Motor neuron (in vitro differentiated cells): ENCODE measurements at regions of chr1 and their contacts with region 1.

Region 1: GRCh38 chr1:151934048-151934493 is 24.8 kb upstream of the THEM4 start:
- ATAC-seq: peak in 7 of 8 experiments; percentile 57 to 96 (median 76)
- H3K4me3 ChIP-seq: no peak overlapping the region
- H3K27ac ChIP-seq: no peak overlapping the region
- H3K4me1 ChIP-seq: peaks cover 0 to 15% of the 10 kb centered on the region in 2 donors

Region 2: DNA sequence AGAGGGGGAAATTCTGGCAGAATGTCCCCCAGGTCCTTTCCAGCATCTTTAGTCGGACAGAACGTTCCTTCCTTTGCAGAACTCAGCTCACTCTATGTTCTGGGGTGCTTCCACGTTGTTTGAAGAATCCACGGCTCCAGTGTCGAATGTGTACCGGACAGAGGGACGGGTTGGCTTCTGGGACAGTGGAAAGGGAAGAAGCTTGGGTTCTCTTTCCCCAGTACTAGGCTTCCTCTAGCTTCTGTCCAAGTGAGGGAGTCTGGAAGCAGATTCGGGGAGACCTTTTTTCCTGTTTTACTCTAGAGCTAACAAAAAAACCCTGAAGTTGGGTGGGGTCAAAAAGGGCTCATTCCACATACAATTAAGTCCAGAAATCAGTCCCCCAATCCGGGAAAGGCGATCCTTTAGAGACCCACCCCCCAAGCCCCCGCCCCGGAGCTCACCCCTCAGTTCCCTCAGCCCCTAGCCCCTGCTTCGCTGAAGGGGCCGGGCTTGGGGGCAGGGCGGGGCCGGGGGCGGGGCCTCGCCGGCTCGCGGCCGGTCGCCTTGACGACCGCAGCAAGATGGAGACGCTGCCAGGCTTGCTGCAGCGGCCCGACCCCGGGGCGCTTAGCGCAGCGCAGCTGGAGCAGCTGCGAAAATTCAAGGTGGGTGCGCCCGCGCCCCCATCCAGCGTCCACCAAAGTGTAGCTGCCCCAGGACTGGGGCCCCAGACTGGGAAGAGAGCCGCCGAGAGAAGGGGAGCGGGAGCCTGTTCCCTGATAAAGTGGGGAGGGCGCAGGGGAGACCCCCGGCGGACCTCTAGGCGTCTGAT is 212.9 kb before region 1 on chr1 and contains the start of gene RIIAD1:
- in situ Hi-C with region 1: no loop called
- ATAC-seq: peak; percentile 59 to 78 (median 68)
- H3K4me3 ChIP-seq: peak within 1 kb of the TSS; percentile 34 to 55 (median 44)
- H3K27ac ChIP-seq: no peak within 1 kb of the TSS
- H3K4me1 ChIP-seq: peaks cover 20 to 39% of the 10 kb centered on the region in 2 donors
- total RNA-seq, gene RIIAD1: 1.1 to 20.8 (median 9.0) TPM in 6 of 8 experiments, not detected in the others

Region 3: GRCh38 chr1:151993654-151994496 is 59.8 kb after region 1 on chr1 and contains the start of gene S100A10:
- in situ Hi-C with region 1: loop called in 2 of 9 experiments (anchors 10 kb)
- ATAC-seq: peak; percentile 24 to 88 (median 74)
- H3K4me3 ChIP-seq: peak within 1 kb of the TSS; percentile 25 to 70 (median 39)
- H3K27ac ChIP-seq: peak within 1 kb of the TSS in 1 of 2 donors; percentile 6
- H3K4me1 ChIP-seq: peaks cover 0 to 37% of the 10 kb centered on the region in 2 donors
- total RNA-seq, gene S100A10: 0.46 to 399 (median 22.8) TPM

Region 4: DNA sequence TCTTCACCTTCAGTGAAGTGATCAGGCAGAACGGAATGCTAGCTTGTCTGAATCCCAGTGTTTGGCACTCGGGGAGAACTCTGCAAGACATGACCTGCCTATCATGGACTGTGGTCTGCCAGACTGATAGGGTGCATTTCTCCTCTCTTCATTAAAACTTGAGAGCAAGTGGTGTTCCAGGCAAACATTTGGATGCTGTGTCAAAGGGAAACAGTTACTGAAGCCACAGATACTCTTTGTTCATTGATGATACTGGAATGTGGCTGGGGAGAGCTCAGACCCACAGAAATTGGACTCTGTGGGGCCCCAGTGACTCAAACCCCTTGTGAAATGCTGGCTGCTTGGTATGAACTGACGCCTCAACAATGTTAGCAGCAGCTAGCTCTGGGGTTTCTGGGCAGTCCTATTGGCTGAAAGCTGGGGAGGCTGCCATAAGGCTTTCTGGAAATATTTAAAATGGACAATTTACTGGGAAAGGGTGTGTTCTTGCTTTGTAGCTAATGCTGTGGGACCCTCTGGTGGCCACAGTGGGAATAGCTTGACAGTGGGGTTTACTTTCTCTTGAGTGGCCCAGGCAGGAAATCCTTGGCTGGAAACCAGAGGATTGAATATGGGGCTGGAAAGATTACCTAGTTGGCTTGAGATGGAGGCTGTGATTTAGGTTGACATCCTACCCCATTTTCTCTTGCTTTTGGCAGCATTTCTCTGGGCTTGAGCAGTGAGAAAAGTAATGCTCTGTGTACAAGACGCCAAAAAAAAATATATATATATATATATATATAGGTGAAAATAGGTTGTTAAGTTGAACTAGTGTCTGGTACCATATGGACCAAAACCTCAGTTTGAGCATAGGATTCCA is 67.5 kb after region 1 on chr1:
- in situ Hi-C with region 1: loop called in 3 of 9 experiments (anchors 10 kb)
- ATAC-seq: peak; percentile 78 to 97 (median 86)
- H3K4me3 ChIP-seq: no peak overlapping the region
- H3K27ac ChIP-seq: no peak overlapping the region
- H3K4me1 ChIP-seq: no peaks in the 10 kb centered on the region